ENCODE measurements at regions of chr2 and their contacts with region 1.

Region 1: DNA sequence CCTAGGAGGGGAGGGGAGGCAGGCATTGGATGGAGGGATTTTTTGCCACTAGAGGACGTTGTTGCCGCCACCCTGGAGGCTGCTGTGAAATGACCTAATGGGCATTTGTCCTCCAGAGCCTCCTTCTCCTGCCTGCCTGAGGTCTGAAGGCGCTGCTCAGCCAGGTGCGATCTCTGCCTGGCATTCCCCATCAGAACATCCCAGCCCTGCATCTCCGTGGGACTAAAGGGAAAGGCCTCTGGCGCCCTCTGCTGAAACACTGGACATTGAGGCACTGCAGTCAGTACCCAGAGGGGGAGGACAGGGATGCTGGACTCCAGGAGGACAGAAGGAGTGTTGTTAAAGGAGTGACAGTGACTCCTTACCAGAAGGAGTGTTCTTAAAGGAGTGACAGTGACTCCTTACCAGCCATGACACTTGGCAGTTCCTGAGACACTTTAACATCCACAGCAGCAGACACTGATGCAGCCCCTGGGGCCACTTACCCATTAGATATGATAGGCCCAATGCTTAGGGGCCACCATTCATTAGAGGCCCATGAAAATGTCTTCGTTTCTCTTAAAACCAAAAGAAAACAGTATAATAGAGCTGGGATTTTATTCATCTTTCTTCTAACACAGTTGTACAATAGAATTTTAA is 17.0 kb downstream of the THNSL2 start:
- DNase-seq: peak; percentile 19
- H3K4me3 ChIP-seq: no peak overlapping the region
- H3K27ac ChIP-seq: no peak overlapping the region
- H3K4me1 ChIP-seq: no peaks in the 10 kb centered on the region
- CTCF ChIP-seq: peak; percentile 74

Region 2: GRCh38 chr2:88059979-88060906 is 126.9 kb before region 1 on chr2:
- CTCF ChIA-PET with region 1: no interaction called
- POLR2A ChIA-PET with region 1: no interaction called
- intact Hi-C with region 1: loop called (anchors 2 kb)
- DNase-seq: peak; percentile 68
- H3K4me3 ChIP-seq: no peak overlapping the region
- H3K27ac ChIP-seq: no peak overlapping the region
- H3K4me1 ChIP-seq: peaks cover 8% of the 10 kb centered on the region
- CTCF ChIP-seq: peak; percentile 88

Region 3: DNA sequence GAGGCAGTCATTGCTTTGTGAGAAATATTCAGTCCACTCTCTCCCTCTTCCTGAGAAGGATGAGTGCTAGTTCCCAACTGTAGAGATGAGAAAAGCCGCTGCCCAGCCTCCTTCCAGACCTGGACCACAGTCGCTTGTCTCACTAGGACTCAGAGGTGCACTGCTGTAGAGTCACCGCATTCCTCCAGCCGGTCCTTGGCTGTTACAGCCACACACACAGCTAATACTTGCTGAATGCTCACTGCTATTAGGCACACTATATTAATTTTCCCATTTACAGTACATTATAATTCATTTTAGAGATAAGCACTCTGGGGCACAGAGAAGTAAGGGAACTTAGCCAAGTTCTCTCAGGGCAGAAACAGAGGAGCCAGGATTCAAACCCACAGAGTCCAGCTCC is 49.3 kb before region 1 on chr2:
- CTCF ChIA-PET with region 1: interaction called, 10 read pairs
- POLR2A ChIA-PET with region 1: interaction called, 3 read pairs
- intact Hi-C with region 1: no loop called
- DNase-seq: no peak
- H3K4me3 ChIP-seq: no peak overlapping the region
- H3K27ac ChIP-seq: no peak overlapping the region
- H3K4me1 ChIP-seq: no peaks in the 10 kb centered on the region
- CTCF ChIP-seq: no peak

Region 4: DNA sequence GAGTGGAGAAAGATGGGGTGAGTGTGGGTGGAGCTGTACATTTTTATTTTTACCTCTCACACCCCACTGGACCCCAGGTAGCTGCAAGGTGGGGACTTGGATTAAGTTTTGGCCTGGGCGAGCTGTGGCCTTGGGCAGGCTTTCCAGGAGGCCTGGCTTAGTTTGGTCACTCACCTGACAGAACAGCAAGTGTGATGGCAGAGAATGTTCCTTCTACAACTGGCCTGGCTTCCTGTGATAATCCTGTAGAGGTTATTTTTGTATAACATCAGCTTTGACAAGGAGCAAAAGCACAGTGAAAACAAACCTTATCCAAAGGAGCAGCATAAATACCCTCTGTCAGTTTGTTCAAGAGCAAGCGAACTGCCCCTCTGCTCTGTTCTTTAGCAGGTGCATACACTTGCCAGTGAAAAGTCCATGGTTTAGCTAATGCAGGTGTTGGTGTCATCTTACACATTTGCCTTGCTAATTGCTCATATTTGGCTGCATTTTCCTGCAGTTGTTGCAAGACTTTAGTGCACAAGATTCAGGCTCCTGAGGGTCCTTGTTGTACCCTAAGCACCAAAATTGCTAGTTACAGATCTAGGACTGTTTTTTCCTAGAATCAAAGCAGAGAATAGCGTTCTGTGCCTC is 10.7 kb before region 1 on chr2:
- CTCF ChIA-PET with region 1: interaction called, 13 read pairs
- POLR2A ChIA-PET with region 1: no interaction called
- intact Hi-C with region 1: no loop called
- DNase-seq: no peak
- H3K4me3 ChIP-seq: no peak overlapping the region
- H3K27ac ChIP-seq: no peak overlapping the region
- H3K4me1 ChIP-seq: no peaks in the 10 kb centered on the region
- CTCF ChIP-seq: no peak

Region 5: GRCh38 chr2:88220718-88221117 is 33.6 kb after region 1 on chr2:
- CTCF ChIA-PET with region 1: no interaction called
- POLR2A ChIA-PET with region 1: no interaction called
- intact Hi-C with region 1: no loop called
- DNase-seq: peak; percentile 30
- H3K4me3 ChIP-seq: no peak overlapping the region
- H3K27ac ChIP-seq: no peak overlapping the region
- H3K4me1 ChIP-seq: no peaks in the 10 kb centered on the region
- CTCF ChIP-seq: no peak

Region 6: DNA sequence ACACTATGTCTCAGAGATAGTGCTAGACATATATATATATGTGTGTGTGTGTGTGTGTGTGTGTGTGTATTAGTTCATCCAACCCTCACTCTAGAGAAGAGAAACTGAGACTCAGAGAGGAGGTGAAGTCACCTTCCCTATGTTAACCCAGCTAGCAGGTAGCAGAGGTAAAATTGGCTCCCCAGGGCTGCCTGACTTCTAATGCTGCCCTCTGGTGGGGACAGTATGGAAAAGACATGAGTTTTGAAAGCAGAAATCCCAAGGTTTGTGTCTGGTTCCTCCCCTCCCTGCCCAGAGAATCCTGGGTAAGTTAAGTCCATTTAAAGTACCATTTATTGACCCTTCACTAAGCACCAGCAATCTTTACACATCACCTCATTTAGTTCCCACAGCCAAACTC is 120.7 kb after region 1 on chr2:
- CTCF ChIA-PET with region 1: no interaction called
- POLR2A ChIA-PET with region 1: no interaction called
- intact Hi-C with region 1: loop called (anchors 5 kb)
- DNase-seq: peak; percentile 43
- H3K4me3 ChIP-seq: no peak overlapping the region
- H3K27ac ChIP-seq: no peak overlapping the region
- H3K4me1 ChIP-seq: no peaks in the 10 kb centered on the region
- CTCF ChIP-seq: peak; percentile 76

Region 7: DNA sequence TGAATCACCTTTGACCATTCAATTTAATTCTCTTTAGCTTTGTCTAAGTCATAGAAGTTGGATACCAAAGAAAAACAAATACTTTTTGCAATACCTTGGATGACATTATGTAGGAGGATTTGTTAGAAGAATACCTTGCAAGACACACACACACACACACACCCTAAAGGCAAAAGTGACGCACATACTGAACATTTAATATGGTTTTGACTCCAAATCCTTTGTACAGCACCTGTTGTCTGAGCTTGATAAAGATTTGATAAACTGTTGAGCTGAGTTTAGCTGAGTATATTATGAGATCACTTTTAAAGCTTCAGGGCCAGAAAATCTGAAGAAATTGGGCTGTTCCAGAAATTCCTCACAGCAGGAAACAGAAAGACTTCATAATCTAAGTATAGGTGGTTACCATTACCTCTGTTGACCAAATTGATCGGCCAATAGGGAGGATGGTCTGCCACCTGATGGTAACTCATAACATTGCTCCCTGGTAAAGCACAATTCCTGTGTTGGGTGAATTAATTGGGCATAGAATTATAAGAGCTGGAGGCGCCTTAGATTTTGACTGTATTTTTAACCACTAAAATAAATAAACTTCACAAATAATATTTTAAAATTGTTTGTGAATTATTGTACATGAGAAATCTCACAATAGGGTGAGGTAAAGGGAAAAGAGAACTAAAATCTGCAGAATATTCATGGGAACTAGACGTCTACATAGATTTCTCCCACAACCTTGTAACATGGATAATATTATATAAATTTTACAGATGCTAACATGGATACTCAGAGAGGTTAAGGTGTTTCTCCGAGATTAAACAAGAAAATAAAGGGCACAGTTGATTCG is 482.4 kb after region 1 on chr2:
- CTCF ChIA-PET with region 1: no interaction called
- POLR2A ChIA-PET with region 1: no interaction called
- intact Hi-C with region 1: loop called (anchors 5 kb)
- DNase-seq: peak; percentile 74
- H3K4me3 ChIP-seq: no peak overlapping the region
- H3K27ac ChIP-seq: no peak overlapping the region
- H3K4me1 ChIP-seq: no peaks in the 10 kb centered on the region
- CTCF ChIP-seq: peak; percentile 98